ENCODE measurements at regions of chrX and their contacts with region 1.

Region 1: DNA sequence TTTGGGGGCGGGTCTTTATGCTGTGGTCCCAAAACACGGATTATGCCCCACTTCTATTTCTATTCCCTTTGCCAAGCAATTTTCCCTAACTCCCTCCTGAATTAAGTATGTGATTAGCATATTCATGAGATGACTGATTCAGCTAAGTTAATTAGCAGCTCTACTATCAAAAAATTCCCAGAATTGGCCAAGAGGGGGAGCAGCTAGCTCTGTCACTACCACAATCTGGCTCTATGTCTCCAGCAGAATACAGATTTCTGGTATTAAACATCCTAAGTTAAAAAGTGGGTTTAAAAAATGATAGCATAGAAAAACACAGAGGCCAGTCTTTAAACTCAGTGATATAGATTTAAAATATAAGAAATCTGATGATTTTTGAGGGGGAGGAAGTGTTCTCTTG is 80.3 kb downstream of the GPC4 start:
- DNase-seq: no peak
- H3K4me3 ChIP-seq: no peak overlapping the region
- H3K27ac ChIP-seq: no peak overlapping the region
- H3K4me1 ChIP-seq: peaks cover 0 to 8% (median 4%) of the 10 kb centered on the region in 4 experiments; a peak in 5 of 7 replicates
- H3K27me3 ChIP-seq: no peaks in the 10 kb centered on the region
- CTCF ChIP-seq: peak in 2 of 3 experiments; percentile 9 to 54; a peak in 2 of 4 replicates
- EP300 ChIP-seq: no peak
- POLR2A ChIP-seq: no peak
- RAD21 ChIP-seq: peak; percentile 46 to 53

Region 2: DNA sequence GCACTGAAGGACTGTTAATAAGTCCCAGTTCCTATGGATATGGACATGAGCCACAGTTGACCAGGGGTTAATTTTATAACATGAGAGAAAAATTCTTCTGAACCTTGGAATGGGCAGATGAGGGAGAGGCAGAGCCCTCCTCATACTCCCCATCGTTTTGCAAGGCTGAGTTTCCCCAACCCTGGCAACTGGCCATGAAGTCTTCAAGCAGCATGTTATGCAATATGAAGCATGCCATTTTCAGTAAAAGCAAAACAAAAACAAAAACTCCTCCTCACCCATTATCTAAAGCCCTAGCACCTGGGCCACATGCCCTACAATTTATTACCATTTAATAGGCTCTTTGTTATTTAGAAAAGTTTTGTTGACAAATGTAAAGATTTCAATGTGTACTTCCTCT is 15.7 kb after region 1 on chrX:
- CTCF ChIA-PET with region 1: interaction called, 10 read pairs
- POLR2A ChIA-PET with region 1: interaction called, 4 read pairs
- DNase-seq: no peak
- H3K4me3 ChIP-seq: no peak overlapping the region
- H3K27ac ChIP-seq: no peak overlapping the region
- H3K4me1 ChIP-seq: peaks cover 4 to 15% (median 9%) of the 10 kb centered on the region in 4 experiments; a peak in 5 of 7 replicates
- H3K27me3 ChIP-seq: no peaks in the 10 kb centered on the region
- CTCF ChIP-seq: no peak
- EP300 ChIP-seq: no peak
- POLR2A ChIP-seq: no peak
- RAD21 ChIP-seq: no peak